MCF 10A (cell line): ENCODE measurements at regions of chr6 and their contacts with region 1.

Region 1: GRCh38 chr6:155327326-155328073 is 13.2 kb upstream of the TFB1M start:
- DNase-seq: peak; percentile 47
- H3K4me3 Mint-ChIP-seq: no peak overlapping the region
- H3K27ac Mint-ChIP-seq: no peak overlapping the region
- H3K4me1 Mint-ChIP-seq: peaks cover 6% of the 10 kb centered on the region
- H3K27me3 Mint-ChIP-seq: no peaks in the 10 kb centered on the region
- CTCF ChIP-seq: peak; percentile 74

Region 2: DNA sequence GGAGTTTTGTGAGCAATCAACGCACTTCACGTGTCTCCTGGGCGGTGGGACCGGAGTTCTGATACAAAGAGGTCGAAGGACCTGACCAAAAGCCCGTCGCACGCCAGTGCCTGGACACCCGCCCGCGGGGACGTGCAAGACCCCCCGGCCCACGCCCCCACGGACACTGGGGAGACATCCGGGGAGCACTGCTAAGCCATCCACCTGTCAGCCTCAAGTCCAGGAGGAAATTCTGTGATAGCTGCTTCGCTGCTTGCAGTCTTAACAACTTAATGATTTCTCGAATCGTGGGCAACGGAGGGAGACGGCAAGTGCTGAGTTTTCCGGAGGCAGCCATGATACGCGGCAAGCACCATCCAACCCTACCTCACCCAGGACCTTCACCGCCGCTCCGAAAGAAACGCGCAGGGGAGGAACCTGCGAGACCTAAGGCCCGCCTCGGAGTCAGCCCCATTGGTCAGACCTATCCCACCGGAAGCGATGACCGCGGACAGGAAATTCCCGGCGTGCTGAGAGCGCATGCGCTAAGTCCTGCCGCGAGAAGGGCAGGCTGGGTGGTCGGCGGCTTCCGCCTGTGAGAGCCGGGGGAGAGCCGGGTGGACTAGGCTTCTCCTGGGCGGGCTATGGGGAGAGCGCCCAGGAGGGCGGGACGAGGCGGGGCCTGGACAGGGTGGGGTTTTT is 13.3 kb before region 1 on chr6 and contains the start of gene TFB1M:
- CTCF ChIA-PET with region 1: interaction called, 19 read pairs
- POLR2A ChIA-PET with region 1: interaction called, 6 read pairs
- intact Hi-C with region 1: no loop called
- DNase-seq: peak; percentile 98
- H3K4me3 Mint-ChIP-seq: peak within 1 kb of the TSS; percentile 79
- H3K27ac Mint-ChIP-seq: peak within 1 kb of the TSS; percentile 97
- H3K4me1 Mint-ChIP-seq: peaks cover 8% of the 10 kb centered on the region
- H3K27me3 Mint-ChIP-seq: no peaks in the 10 kb centered on the region
- CTCF ChIP-seq: no peak
- total RNA-seq, gene TFB1M: 26.8 and 31.0 TPM in 2 replicates

Region 3: GRCh38 chr6:155366325-155366724 is 38.8 kb after region 1 on chr6:
- CTCF ChIA-PET with region 1: no interaction called
- POLR2A ChIA-PET with region 1: no interaction called
- intact Hi-C with region 1: no loop called
- DNase-seq: no peak
- H3K4me3 Mint-ChIP-seq: no peak overlapping the region
- H3K27ac Mint-ChIP-seq: no peak overlapping the region
- H3K4me1 Mint-ChIP-seq: no peaks in the 10 kb centered on the region
- H3K27me3 Mint-ChIP-seq: no peaks in the 10 kb centered on the region
- CTCF ChIP-seq: no peak

Region 4: GRCh38 chr6:155493694-155494143 is 166.2 kb after region 1 on chr6:
- CTCF ChIA-PET with region 1: interaction called, 4 read pairs
- POLR2A ChIA-PET with region 1: no interaction called
- intact Hi-C with region 1: loop called (anchors 1 kb)
- DNase-seq: peak; percentile 95
- H3K4me3 Mint-ChIP-seq: no peak overlapping the region
- H3K27ac Mint-ChIP-seq: peak overlapping the region; percentile 64
- H3K4me1 Mint-ChIP-seq: peaks cover 22% of the 10 kb centered on the region
- H3K27me3 Mint-ChIP-seq: no peaks in the 10 kb centered on the region
- CTCF ChIP-seq: no peak

Region 5: DNA sequence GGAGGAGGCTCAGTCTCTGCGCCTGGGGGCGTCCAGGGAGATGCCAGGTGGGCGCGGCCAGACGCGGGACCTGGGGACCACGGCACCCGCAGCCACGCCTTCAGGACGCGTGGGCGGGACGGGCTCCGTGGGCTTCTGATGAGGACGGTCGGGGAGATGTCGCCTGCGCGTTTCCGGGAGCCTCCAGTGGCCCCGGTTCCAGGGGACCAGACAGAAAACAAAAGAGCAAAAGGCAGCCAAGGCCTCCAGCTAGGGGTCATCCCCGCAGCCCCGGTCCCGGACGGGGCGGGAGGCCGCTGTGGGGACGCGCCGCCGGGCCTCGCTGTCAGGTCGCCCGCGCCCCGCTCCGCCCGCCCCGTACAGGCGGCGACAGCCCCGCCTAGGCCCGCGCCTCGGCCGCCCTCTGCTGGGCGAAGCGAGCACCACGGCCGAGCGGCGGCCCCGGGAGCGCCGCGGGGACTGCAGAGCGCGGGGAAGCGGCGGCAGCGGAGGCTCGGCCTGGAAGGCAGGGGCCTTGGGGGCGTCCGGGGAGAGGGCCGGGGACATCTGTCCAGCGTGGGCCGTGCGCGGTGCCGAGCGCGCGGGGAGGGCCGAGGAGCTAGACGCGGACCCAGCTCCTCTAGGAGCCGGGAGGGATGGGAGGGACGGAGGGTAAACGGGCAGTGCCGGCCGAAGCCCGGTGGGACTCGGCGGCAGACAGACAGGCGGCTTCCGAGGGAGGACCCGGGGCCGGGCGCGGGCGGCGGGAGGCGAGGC is 1947.1 kb after region 1 on chr6:
- CTCF ChIA-PET with region 1: no interaction called
- POLR2A ChIA-PET with region 1: no interaction called
- intact Hi-C with region 1: loop called (anchors 10 kb)
- DNase-seq: peak; percentile 68
- H3K4me3 Mint-ChIP-seq: peak overlapping the region; percentile 73
- H3K27ac Mint-ChIP-seq: no peak overlapping the region
- H3K4me1 Mint-ChIP-seq: no peaks in the 10 kb centered on the region
- H3K27me3 Mint-ChIP-seq: no peaks in the 10 kb centered on the region
- CTCF ChIP-seq: peak; percentile 49